BJ (cell line): ENCODE measurements at regions of chr14 and their contacts with region 1.

Region 1: GRCh38 chr14:30260833-30261607 is 297.9 kb upstream of the G2E3 start:
- DNase-seq: no peak
- H3K4me3 ChIP-seq: no peak overlapping the region
- H3K27me3 ChIP-seq: no peaks in the 10 kb centered on the region
- CTCF ChIP-seq: no peak

Region 2: DNA sequence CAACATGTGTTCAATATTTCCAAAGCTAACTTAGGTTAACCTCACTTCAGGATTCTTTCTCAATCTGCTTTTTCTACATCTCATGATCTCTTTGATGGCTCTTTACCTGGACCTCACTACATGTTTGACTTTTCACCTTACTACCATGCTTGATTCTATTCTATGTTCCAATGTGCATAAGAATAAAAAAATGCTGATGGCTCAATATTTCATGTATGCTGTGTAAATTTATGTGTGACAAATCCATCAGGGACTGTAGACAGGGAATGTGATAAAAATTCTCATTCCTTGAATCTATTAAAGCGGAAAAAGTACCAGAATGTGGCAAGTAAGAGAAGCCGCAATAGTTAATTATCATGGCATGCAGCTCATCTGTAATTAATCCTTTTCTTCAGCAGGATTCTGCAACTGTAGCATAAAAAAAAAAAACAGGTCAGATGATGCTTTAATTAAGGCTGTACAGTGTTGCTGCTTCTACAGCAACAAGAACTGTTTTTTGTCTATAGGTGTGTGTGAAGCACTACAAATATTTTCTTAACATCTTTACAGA is 56.5 kb before region 1 on chr14:
- CTCF ChIA-PET with region 1: no interaction called
- POLR2A ChIA-PET with region 1: no interaction called
- DNase-seq: no peak
- H3K4me3 ChIP-seq: no peak overlapping the region
- H3K27me3 ChIP-seq: no peaks in the 10 kb centered on the region
- CTCF ChIP-seq: no peak

Region 3: DNA sequence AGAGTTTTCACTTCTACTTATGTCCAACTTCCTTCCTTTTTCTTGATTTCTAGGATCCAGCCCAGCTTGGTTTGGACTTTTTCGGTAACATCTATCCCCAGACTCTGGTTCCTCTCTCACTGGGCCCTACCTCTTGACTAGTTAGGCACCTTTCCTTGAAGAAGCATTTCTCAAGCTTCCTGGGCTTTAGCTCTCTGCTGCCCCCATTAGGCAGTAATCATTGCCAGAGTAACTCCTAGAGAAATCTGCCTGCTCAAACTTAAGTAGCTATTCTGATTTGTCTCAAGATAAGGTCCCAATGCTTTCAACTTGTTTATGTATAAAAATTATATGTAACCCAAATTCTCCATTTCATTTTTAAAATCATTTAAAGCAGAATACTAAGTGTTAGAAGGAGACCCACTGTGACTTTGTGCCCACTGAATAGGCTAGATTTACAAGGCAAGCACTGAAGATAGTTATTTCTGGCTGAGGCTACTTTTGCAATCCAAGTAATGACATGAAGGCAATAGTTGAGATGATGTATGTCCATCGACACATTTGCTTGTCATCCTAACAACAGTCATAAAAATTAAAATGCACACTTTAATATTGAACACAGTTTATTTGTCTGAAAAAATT is 22.9 kb after region 1 on chr14:
- CTCF ChIA-PET with region 1: interaction called, 10 read pairs
- POLR2A ChIA-PET with region 1: no interaction called
- DNase-seq: no peak
- H3K4me3 ChIP-seq: no peak overlapping the region
- H3K27me3 ChIP-seq: no peaks in the 10 kb centered on the region
- CTCF ChIP-seq: peak; percentile 93